ENCODE measurements at regions of chr9 and their contacts with region 1.

Region 1: DNA sequence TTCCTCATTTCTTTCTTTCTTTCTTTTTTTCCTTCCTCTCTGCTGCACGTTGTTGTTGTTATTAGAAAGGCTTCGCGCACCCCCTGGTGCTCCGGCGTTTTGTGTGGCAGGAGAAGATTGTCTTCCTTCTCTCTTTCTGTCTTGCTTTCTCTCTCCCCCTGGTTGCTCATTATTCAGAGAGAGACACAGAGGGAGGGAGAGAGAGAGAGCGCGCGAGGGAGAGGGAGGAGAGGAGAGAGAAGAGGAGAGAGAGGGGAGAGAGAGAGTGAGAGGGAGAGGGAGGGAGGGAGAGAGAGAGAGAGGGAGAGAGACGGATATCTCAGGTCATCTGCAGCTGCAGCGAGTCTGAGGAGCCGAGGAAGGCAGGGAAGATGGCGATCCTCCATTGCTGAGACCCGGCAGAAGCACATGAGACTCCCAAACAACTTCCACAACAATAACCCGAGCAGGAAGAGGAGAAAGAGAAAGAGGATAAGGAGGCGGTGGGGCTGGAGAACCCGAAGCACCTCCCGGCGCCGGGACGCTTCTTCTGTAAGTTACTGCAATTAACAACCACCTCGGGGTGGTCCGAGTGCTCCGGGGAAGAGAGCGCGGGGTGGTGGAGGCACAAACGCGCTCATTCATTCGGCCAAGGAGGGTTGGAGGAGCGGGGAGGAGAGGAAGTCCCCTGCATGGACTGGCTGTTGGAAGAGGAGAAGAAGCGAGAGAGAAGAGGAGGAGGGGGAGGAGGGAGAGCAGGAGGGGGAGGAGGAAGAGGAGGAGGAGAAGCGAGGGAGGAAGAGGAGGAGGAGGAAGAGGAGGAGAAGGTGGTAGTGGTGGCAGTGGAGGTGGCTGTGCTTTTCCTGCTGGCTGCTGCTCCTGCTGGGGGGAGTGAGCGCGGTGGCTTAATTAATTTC is at the start of gene ZNF462:
- DNase-seq: peak; percentile 70
- ATAC-seq: peak; percentile 51
- total RNA-seq, gene ZNF462: 21.1 TPM

Region 2: DNA sequence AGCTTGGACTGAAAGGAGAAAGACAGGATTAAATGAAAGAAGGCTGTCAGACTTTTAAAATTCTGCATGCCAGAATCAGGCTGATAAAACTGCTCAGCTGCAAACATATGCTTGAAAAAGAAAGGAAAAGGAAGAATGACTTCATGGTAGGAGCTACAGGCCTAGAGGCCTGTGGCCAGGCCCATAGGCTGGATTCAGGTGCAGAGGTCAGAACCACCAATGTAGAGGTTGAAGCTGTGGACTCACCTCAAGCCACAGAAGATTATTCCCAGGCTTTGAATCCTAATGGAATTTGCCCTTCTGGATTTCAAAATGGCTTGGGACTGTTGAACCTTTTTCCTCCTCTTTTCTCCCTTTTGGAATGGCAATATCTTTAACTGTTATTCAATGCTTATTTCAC is 1121.0 kb before region 1 on chr9:
- intact Hi-C with region 1: no loop called
- DNase-seq: no peak
- ATAC-seq: no peak

Region 3: GRCh38 chr9:105901514-105902109 is 961.5 kb before region 1 on chr9:
- intact Hi-C with region 1: loop called (anchors 5 kb)
- DNase-seq: no peak
- ATAC-seq: peak; percentile 91

Region 4: GRCh38 chr9:106648799-106649198 is 214.3 kb before region 1 on chr9:
- intact Hi-C with region 1: loop called (anchors 10 kb)
- DNase-seq: no peak
- ATAC-seq: no peak

Region 5: GRCh38 chr9:106726070-106726815 is 136.8 kb before region 1 on chr9:
- intact Hi-C with region 1: loop called (anchors 5 kb)
- DNase-seq: no peak
- ATAC-seq: peak; percentile 83

Region 6: DNA sequence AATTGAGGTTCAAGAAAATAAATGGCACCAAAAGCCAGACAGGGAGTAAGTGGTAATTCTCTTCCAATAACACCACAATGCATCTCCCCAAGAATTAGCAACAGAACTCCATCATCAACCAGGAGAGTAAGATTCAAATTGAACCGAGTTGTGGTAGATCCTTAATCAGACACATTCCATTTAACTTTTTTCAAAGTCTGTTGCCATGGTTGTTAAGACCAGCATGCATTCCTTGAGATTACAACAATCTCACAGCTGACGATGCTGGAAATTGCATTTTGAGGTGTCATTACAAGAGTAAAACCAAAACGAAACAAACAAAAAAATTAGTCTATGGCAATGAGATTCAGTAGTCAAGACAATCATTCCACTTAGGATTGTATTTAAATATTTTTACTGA is 79.0 kb before region 1 on chr9:
- intact Hi-C with region 1: no loop called
- DNase-seq: no peak
- ATAC-seq: no peak

Region 7: DNA sequence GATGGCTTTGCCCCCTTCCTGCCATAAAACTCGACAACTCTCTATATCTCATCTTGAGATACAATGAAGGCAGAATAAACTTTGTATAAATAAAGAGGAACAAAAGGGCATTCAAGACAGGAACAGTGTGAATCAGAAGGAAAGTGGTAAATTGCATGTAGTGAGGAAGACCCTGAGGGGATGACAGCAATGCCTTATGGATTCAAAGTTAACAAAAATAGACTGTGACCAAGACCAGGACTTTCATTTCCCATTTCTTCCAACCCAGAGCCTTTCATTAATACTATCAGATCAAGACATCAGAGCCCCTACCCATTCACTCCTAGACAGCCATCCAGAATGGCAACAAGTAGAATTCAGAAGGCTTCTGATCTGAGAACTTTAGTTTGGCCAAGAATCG is 46.5 kb before region 1 on chr9:
- intact Hi-C with region 1: no loop called
- DNase-seq: no peak
- ATAC-seq: no peak

Region 8: GRCh38 chr9:107033966-107034365 is 170.9 kb after region 1 on chr9:
- intact Hi-C with region 1: no loop called
- DNase-seq: no peak
- ATAC-seq: no peak

Region 9: DNA sequence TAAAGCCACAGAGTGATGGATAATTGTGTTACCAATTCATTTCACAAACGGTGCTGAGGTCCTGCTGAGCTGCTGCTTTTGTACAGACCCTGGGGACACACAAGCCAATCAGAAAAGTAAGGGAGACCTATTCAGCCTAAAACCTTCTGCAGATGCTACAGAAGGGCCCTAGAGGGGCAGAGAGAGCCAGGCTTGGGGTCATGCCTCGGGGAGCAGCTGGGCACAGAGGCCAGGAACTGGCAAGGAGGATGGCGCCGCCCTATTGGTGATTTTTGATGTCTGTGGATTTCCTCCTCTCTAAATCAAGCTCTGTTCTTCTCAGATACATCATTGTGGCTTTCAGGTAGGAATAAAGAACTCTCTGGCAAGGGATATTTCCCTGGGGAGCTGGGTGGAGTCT is 181.8 kb after region 1 on chr9:
- intact Hi-C with region 1: loop called (anchors 5 kb)
- DNase-seq: no peak
- ATAC-seq: no peak